Right ventricle myocardium superior (tissue), 1 donor: ENCODE measurements at regions of chr2 and their contacts with region 1.

Region 1: DNA sequence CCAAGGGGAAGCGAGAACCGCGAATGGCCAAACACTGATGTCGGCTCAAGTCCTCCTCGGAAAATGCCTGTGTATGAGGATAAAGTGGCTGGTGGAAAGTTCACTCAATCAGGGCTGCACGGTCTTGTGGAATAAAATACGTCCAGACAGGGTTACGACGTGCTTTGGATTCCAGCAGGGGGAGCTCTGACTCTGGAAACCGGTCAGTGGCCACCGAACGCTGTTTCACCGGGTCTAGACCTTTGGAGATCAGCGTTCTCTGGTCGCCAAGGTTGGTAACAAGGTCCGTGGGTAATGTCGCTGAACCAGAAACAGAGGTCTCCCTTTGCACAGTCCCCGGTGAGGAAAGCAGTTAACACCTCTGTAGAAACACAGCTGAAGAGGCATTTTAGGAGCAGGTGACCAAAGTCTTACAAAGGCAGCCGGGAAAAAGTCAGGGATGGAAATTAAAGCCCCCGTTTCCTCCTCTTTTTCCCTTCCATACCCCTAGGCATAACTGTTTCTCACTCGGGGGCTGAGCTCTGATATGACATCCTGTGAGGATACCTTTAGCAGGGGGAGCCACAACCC is 47.8 kb downstream of the CDCA7 start:
- DNase-seq: peak; percentile 82
- ATAC-seq: peak; percentile 97

Region 2: GRCh38 chr2:173446722-173447121 is 44.2 kb after region 1 on chr2:
- intact Hi-C with region 1: loop called (anchors 2 kb)
- DNase-seq: no peak
- ATAC-seq: no peak